Left cardiac atrium (tissue), 4 donors: ENCODE measurements at regions of chr6 and their contacts with region 1.

Region 1: DNA sequence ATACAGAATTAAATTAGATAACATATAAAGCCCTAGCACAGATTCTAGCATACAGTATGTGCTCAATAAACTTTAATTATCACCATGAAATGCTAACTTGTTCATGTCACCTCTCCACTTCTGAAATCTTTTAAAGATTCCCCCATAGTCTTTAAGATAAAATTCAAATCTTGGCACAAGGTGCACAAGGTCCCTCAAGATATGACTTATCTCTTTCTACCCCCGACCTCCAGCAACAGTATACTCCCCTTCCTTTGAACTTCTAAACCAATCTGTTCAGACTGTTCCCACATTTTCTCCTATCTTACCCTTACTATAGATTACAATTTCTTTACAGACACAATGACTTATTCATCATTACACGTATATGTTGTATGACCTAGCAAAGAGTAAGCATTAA is 29.0 kb downstream of the SEC63 start:
- DNase-seq: no peak
- ATAC-seq: no peak

Region 2: DNA sequence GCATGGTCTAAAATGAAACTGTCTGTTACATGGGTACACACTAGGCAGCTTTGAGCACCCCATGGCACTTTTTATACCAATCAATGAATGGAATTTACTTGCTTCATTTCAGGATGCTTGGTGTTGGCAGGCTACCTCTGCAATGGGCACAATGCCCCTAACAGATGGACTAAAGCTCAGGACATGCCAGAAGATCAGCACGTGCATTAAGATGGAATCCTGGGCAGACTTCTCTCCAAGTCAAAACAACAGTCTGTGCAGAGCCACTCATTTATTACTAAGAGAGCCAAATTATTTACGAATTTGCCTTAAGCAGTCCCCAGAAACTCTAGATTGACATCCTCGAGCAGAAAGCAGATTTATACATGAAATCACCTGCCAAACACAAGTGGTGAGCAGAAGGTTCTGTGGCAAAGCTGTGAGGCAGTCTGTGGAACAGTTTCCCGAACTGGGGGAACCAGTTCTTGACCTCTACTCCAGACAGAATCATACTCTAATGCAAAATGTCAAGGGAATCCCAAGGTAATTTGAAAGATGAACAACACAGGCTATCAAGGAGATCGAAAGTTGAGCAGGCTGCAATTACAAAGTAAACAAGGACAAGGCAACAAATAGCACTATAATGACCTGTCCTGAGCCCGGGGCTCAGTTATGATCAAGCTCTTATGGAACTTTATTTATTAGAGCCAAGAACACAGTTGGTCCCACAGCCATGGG is 48.9 kb before region 1 on chr6:
- intact Hi-C with region 1: loop called in 1 of 2 experiments (anchors 5 kb)
- DNase-seq: no peak
- ATAC-seq: no peak